HepG2 (cell line): ENCODE measurements at regions of chr15 and their contacts with region 1.

Region 1: GRCh38 chr15:58469432-58470353 is 37.9 kb downstream of the LIPC start:
- DNase-seq: peak; percentile 90
- ATAC-seq: peak; percentile 39
- H3K4me3 ChIP-seq: peak overlapping the region in 1 of 3 experiments; percentile 13; a peak in 2 of 6 replicates
- H3K27ac ChIP-seq: peak overlapping the region; percentile 78
- H3K4me1 ChIP-seq: peaks cover 94% of the 10 kb centered on the region
- H3K27me3 ChIP-seq: no peaks in the 10 kb centered on the region
- CTCF ChIP-seq: no peak
- EP300 ChIP-seq: peak in 1 of 2 experiments; percentile 71; a peak in 2 of 4 replicates
- POLR2A ChIP-seq: no peak
- RAD21 ChIP-seq: no peak

Region 2: GRCh38 chr15:58433597-58434333 is 35.9 kb before region 1 on chr15:
- CTCF ChIA-PET with region 1: no interaction called
- POLR2A ChIA-PET with region 1: interaction called, 12 read pairs
- in situ Hi-C with region 1: no loop called
- intact Hi-C with region 1: no loop called
- DNase-seq: no peak
- ATAC-seq: no peak; the same call in 2 of the 3 replicates
- H3K4me3 ChIP-seq: peak overlapping the region; percentile 17 to 73 (median 70); a peak in 3 of 6 replicates
- H3K27ac ChIP-seq: no peak overlapping the region
- H3K4me1 ChIP-seq: peaks cover 55% of the 10 kb centered on the region
- H3K27me3 ChIP-seq: no peaks in the 10 kb centered on the region; a peak in 1 of 5 replicates
- CTCF ChIP-seq: 0 out of 2 replicates have a peak, but pooled peaks have one; percentile 14
- EP300 ChIP-seq: no peak
- POLR2A ChIP-seq: no peak
- RAD21 ChIP-seq: no peak

Region 3: GRCh38 chr15:58457381-58457965 is 12.2 kb before region 1 on chr15:
- CTCF ChIA-PET with region 1: no interaction called
- POLR2A ChIA-PET with region 1: interaction called, 49 read pairs
- in situ Hi-C with region 1: no loop called
- intact Hi-C with region 1: no loop called
- DNase-seq: no peak
- ATAC-seq: no peak
- H3K4me3 ChIP-seq: no peak overlapping the region
- H3K27ac ChIP-seq: no peak overlapping the region
- H3K4me1 ChIP-seq: peaks cover 66% of the 10 kb centered on the region
- H3K27me3 ChIP-seq: no peaks in the 10 kb centered on the region
- CTCF ChIP-seq: no peak
- EP300 ChIP-seq: no peak
- POLR2A ChIP-seq: no peak
- RAD21 ChIP-seq: no peak

Region 4: DNA sequence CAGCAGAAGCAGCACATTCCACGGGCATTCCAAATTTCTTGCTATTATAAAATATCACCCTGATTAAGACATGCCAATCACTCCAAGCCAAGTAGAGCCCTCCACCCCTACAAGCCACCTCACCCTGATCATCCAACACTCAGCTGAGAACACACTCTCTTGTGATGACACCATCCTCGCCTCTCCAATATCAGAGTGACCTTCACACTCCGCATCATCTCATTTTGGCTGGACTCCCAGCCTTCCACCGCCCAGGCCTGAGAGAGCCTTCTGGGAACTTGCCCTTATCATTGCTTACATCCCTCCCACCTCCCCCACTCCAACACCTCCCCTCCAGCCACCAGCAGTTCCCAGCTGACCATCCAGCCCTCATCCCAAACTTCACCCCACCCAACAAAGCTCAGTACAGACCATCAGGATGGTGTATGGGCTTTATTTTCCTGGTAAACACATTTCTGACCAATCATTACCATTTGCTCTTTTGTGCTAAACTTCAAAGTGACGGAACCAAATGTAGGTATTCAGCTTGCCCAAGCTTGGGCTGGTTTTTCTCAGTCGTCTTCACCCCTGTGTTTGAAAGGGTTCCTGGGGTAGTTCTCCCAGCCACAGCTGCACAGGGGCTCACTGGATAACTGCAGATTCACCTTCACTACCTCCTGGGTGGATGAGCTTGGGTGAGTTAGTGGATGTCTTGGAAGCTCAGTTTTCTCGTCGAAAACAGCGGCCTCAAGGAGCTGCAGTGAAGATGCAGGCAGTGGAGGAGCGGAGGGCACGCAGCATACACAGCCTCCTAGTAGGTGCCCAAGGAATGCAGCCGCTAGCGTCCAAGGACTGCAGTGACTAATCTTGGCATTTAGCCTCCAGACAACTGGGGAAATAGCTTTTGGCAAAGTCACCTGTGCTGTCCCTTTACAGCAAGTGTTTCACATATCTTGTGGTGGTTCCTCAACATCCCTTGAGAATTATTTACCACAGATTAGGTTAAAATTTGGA is 77.2 kb after region 1 on chr15:
- CTCF ChIA-PET with region 1: no interaction called
- POLR2A ChIA-PET with region 1: interaction called, 14 read pairs
- in situ Hi-C with region 1: loop called (anchors 5 kb)
- intact Hi-C with region 1: no loop called
- DNase-seq: peak; percentile 83
- ATAC-seq: peak; percentile 81
- H3K4me3 ChIP-seq: no peak overlapping the region
- H3K27ac ChIP-seq: peak overlapping the region; percentile 25
- H3K4me1 ChIP-seq: peaks cover 40% of the 10 kb centered on the region
- H3K27me3 ChIP-seq: no peaks in the 10 kb centered on the region
- CTCF ChIP-seq: no peak
- EP300 ChIP-seq: peak in 1 of 2 experiments; percentile 51; a peak in 1 of 4 replicates
- POLR2A ChIP-seq: no peak
- RAD21 ChIP-seq: no peak

Region 5: DNA sequence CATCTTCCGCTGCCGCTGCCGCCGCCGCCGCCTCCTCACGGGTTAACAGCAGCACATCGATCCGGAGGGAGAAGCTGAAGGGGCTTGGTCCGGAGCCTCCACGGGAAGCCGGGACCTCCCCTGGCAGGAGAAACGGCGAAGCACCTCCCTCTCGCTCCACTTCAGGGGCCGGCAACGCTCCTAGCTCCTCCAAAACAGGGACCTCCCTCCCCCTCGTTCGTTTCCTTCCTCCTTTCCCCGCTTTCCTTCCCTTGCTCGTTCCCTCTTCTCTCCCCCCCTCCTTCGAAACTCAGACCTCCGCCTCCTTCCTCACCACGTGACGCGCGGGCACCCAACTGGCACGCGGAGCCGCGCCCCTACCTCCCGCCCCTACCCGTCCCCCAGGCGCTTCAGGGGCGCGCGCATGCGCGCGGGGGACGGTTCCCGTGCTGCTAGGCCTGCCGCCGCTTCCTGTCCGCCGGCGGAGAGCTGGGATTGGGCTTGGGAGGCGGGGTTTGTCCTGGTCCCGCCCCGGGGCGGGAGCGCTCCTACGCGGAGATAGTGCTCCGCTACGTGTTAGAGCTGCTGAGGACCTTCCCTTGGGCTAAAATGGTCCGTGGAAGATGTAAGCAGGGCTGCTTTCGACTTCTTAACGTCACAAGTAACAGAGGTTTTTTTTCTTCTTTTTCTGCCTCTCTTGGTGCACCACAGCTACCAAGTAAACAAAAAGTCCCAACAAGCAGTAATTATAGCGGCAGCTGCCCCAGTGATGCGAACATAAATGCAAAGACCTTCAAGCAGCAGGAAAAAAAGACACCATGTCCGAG is 280.0 kb after region 1 on chr15 and contains the start of gene ADAM10:
- CTCF ChIA-PET with region 1: no interaction called
- POLR2A ChIA-PET with region 1: interaction called, 16 read pairs
- in situ Hi-C with region 1: no loop called
- intact Hi-C with region 1: no loop called
- DNase-seq: peak; percentile 95
- ATAC-seq: peak; percentile 96
- H3K4me3 ChIP-seq: peak within 1 kb of the TSS; percentile 91 to 99 (median 95)
- H3K27ac ChIP-seq: peak within 1 kb of the TSS; percentile 97
- H3K4me1 ChIP-seq: peaks cover 32% of the 10 kb centered on the region
- H3K27me3 ChIP-seq: no peaks in the 10 kb centered on the region; a peak in 1 of 5 replicates
- CTCF ChIP-seq: peak; percentile 21; the same call in 1 of the 2 replicates
- EP300 ChIP-seq: no peak
- POLR2A ChIP-seq: peak; percentile 66 to 83
- RAD21 ChIP-seq: no peak
- total RNA-seq, gene ADAM10: 86.8 and 125 TPM in 2 replicates